Activated CD4-positive, alpha-beta T cell treated with anti-CD3 and anti-CD28 coated beads for 36 hours (primary cell): ENCODE measurements at regions of chr1 and their contacts with region 1.

Region 1: GRCh38 chr1:156212833-156213643 is at the start of gene PMF1:
- DNase-seq: peak; percentile 98
- ATAC-seq: peak; percentile 90
- H3K4me3 Mint-ChIP-seq: peak within 1 kb of the TSS; percentile 76
- H3K27ac Mint-ChIP-seq: peak within 1 kb of the TSS; percentile 98
- H3K4me1 Mint-ChIP-seq: peaks cover 41% of the 10 kb centered on the region
- H3K27me3 Mint-ChIP-seq: no peaks in the 10 kb centered on the region
- total RNA-seq, gene PMF1: 108 to 117 TPM

Region 2: GRCh38 chr1:156096640-156097391 is 116.2 kb before region 1 on chr1:
- CTCF ChIA-PET with region 1: interaction called, 11 read pairs
- POLR2A ChIA-PET with region 1: interaction called, 17 read pairs
- intact Hi-C with region 1: loop called in 1 of 2 experiments (anchors 1 kb)
- DNase-seq: peak; percentile 96
- ATAC-seq: peak; percentile 76
- H3K4me3 Mint-ChIP-seq: peak overlapping the region; percentile 60
- H3K27ac Mint-ChIP-seq: peak overlapping the region; percentile 94
- H3K4me1 Mint-ChIP-seq: peaks cover 58% of the 10 kb centered on the region
- H3K27me3 Mint-ChIP-seq: peaks cover 7% of the 10 kb centered on the region

Region 3: GRCh38 chr1:156104065-156104810 is 108.8 kb before region 1 on chr1:
- CTCF ChIA-PET with region 1: interaction called, 3 read pairs
- POLR2A ChIA-PET with region 1: interaction called, 17 read pairs
- intact Hi-C with region 1: loop called in 1 of 2 experiments (anchors 1 kb)
- DNase-seq: peak; percentile 64
- ATAC-seq: peak; percentile 30
- H3K4me3 Mint-ChIP-seq: no peak overlapping the region
- H3K27ac Mint-ChIP-seq: peak overlapping the region; percentile 58
- H3K4me1 Mint-ChIP-seq: peaks cover 74% of the 10 kb centered on the region
- H3K27me3 Mint-ChIP-seq: peaks cover 5% of the 10 kb centered on the region

Region 4: DNA sequence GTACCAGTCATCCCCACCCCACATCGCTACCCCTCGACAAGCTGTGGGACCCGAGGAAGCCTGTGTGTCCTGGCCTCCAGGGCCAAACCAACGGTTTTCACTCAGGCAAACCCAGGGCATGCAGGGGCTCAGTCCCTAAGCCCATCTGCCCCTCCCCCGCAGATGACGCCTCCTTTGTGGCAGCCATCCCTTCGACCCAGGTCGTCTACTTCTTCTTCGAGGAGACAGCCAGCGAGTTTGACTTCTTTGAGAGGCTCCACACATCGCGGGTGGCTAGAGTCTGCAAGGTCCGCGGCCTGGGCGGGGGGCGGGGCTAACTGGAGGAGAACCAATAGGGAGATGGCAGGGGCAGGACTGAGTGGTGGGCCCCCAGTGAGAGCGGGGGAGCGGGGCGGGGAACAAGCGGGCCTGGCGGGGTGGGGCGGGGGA is 52.3 kb before region 1 on chr1:
- CTCF ChIA-PET with region 1: interaction called, 5 read pairs
- POLR2A ChIA-PET with region 1: interaction called, 9 read pairs
- intact Hi-C with region 1: loop called (anchors 1 to 2 kb)
- DNase-seq: peak; percentile 86
- ATAC-seq: peak; percentile 60
- H3K4me3 Mint-ChIP-seq: peak overlapping the region; percentile 68
- H3K27ac Mint-ChIP-seq: peak overlapping the region; percentile 88
- H3K4me1 Mint-ChIP-seq: peaks cover 84% of the 10 kb centered on the region
- H3K27me3 Mint-ChIP-seq: no peaks in the 10 kb centered on the region

Region 5: GRCh38 chr1:156193488-156194299 is 19.3 kb before region 1 on chr1 and contains the start of gene SLC25A44:
- CTCF ChIA-PET with region 1: interaction called, 7 read pairs
- POLR2A ChIA-PET with region 1: interaction called, 17 read pairs
- intact Hi-C with region 1: loop called (anchors 1 to 2 kb)
- DNase-seq: peak; percentile 98
- ATAC-seq: peak; percentile 96
- H3K4me3 Mint-ChIP-seq: peak within 1 kb of the TSS; percentile 100
- H3K27ac Mint-ChIP-seq: peak within 1 kb of the TSS; percentile 97
- H3K4me1 Mint-ChIP-seq: peaks cover 43% of the 10 kb centered on the region
- H3K27me3 Mint-ChIP-seq: no peaks in the 10 kb centered on the region
- total RNA-seq, gene SLC25A44: 42.4 to 51.9 TPM

Region 6: GRCh38 chr1:156198831-156199349 is 14.1 kb before region 1 on chr1:
- CTCF ChIA-PET with region 1: interaction called, 7 read pairs
- POLR2A ChIA-PET with region 1: interaction called, 17 read pairs
- intact Hi-C with region 1: loop called (anchors 1 to 2 kb)
- DNase-seq: peak; percentile 65
- ATAC-seq: peak; percentile 80
- H3K4me3 Mint-ChIP-seq: no peak overlapping the region
- H3K27ac Mint-ChIP-seq: no peak overlapping the region
- H3K4me1 Mint-ChIP-seq: peaks cover 26% of the 10 kb centered on the region
- H3K27me3 Mint-ChIP-seq: no peaks in the 10 kb centered on the region

Region 7: GRCh38 chr1:156245451-156246232 is 32.6 kb after region 1 on chr1:
- CTCF ChIA-PET with region 1: no interaction called
- POLR2A ChIA-PET with region 1: no interaction called
- intact Hi-C with region 1: no loop called
- DNase-seq: peak; percentile 64
- ATAC-seq: peak; percentile 55
- H3K4me3 Mint-ChIP-seq: peak overlapping the region; percentile 59
- H3K27ac Mint-ChIP-seq: peak overlapping the region; percentile 25
- H3K4me1 Mint-ChIP-seq: peaks cover 11% of the 10 kb centered on the region
- H3K27me3 Mint-ChIP-seq: peaks cover 4% of the 10 kb centered on the region